ENCODE measurements at regions of chr14 and their contacts with region 1.

Region 1: DNA sequence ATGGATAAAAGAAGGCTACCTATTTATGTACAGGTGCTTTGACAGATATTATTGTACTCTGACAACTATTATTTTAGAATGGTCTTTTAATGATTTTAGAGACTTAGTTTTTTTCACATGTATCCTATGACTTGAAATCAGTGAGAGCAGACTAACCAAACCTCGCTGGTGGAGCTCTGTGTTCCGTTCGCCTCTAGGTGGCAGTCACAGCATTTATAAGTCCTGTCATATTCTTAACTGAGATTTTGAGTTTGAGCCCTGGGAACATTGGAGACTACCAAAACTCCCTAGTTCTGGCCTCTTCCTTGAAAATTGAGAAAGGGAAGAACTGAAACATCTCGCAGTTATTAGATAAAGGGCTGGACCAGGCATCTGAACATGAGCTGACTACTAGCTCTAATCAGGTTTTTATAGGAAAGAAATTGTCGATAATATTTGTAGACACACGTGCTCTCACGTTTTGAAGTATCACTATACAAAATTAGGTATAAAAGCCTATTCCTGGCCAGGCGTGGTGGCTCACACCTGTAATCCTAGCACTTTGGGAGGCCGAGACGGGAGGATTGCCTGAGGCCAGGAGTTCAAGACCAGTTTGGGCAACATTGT is 48.3 kb downstream of the TTLL5 start:
- DNase-seq: peak; percentile 80
- H3K4me3 Mint-ChIP-seq: no peak overlapping the region
- H3K27ac Mint-ChIP-seq: no peak overlapping the region
- H3K4me1 Mint-ChIP-seq: peaks cover 20% of the 10 kb centered on the region
- H3K27me3 Mint-ChIP-seq: no peaks in the 10 kb centered on the region
- CTCF ChIP-seq: peak; percentile 62

Region 2: GRCh38 chr14:75697386-75697785 is 11.9 kb before region 1 on chr14:
- CTCF ChIA-PET with region 1: interaction called, 21 read pairs
- POLR2A ChIA-PET with region 1: interaction called, 4 read pairs
- intact Hi-C with region 1: no loop called
- DNase-seq: no peak
- H3K4me3 Mint-ChIP-seq: no peak overlapping the region
- H3K27ac Mint-ChIP-seq: no peak overlapping the region
- H3K4me1 Mint-ChIP-seq: no peaks in the 10 kb centered on the region
- H3K27me3 Mint-ChIP-seq: no peaks in the 10 kb centered on the region
- CTCF ChIP-seq: no peak

Region 3: GRCh38 chr14:75794615-75795038 is 85.3 kb after region 1 on chr14:
- CTCF ChIA-PET with region 1: interaction called, 13 read pairs
- POLR2A ChIA-PET with region 1: interaction called, 6 read pairs
- intact Hi-C with region 1: loop called (anchors 1 kb)
- DNase-seq: peak; percentile 26
- H3K4me3 Mint-ChIP-seq: no peak overlapping the region
- H3K27ac Mint-ChIP-seq: no peak overlapping the region
- H3K4me1 Mint-ChIP-seq: no peaks in the 10 kb centered on the region
- H3K27me3 Mint-ChIP-seq: no peaks in the 10 kb centered on the region
- CTCF ChIP-seq: peak; percentile 24

Region 4: DNA sequence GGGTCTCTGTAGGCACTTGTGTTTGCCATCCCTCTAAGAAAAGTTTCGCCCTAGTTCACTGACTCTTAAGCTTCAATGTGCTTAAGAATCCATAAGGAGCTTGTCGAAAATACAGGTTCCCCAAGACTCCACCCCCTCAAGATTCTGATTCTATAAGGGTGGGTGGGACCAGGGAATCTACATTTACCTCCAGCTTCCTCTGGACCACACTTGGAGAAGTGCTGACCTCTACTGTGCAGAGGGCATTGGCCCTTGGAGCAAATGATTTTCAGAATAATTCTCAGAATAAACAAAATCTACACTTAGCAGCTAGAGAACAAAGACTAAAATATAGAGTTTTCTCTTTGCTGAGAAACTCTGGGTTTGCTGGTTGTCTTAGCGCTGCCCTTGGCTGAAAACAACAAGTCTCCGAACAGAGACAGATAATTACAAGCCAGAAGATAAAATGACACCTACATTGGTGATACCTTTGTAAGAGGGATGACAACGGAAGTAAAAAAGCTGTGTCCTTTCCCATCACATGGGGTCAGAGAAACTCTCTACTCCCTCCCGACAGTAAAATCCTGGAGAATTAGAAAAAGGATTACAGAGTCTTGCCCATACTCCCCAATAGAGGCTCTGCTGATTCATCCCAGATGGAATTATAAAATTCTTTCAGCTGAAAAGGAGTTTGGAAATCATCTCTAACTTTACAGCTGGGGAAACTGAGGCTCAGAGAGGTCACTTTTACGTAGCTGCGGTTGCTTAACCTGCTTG is 267.7 kb after region 1 on chr14:
- CTCF ChIA-PET with region 1: interaction called, 205 read pairs
- POLR2A ChIA-PET with region 1: interaction called, 49 read pairs
- intact Hi-C with region 1: loop called (anchors 1 kb)
- DNase-seq: no peak
- H3K4me3 Mint-ChIP-seq: no peak overlapping the region
- H3K27ac Mint-ChIP-seq: no peak overlapping the region
- H3K4me1 Mint-ChIP-seq: peaks cover 26% of the 10 kb centered on the region
- H3K27me3 Mint-ChIP-seq: no peaks in the 10 kb centered on the region
- CTCF ChIP-seq: no peak

Region 5: GRCh38 chr14:76050797-76051392 is 341.6 kb after region 1 on chr14:
- CTCF ChIA-PET with region 1: interaction called, 4 read pairs
- POLR2A ChIA-PET with region 1: no interaction called
- intact Hi-C with region 1: loop called (anchors 5 kb)
- DNase-seq: peak; percentile 65
- H3K4me3 Mint-ChIP-seq: no peak overlapping the region
- H3K27ac Mint-ChIP-seq: no peak overlapping the region
- H3K4me1 Mint-ChIP-seq: no peaks in the 10 kb centered on the region
- H3K27me3 Mint-ChIP-seq: no peaks in the 10 kb centered on the region
- CTCF ChIP-seq: peak; percentile 84